CD4-positive, alpha-beta memory T cell (primary cell): ENCODE measurements at regions of chr2 and their contacts with region 1.

Region 1: GRCh38 chr2:21042958-21043743 is 722 bp downstream of the APOB start:
- DNase-seq: peak in 4 of 5 donors; percentile 26 to 36 (median 30)
- H3K4me3 ChIP-seq: no peak overlapping the region
- H3K4me3 Mint-ChIP-seq: peak overlapping the region in 6 of 8 donors; percentile 14 to 71 (median 54)
- H3K27ac ChIP-seq: no peak overlapping the region
- H3K27ac Mint-ChIP-seq: peak overlapping the region in 1 of 7 donors; percentile 40
- H3K4me1 ChIP-seq: peaks cover 5% of the 10 kb centered on the region
- H3K4me1 Mint-ChIP-seq: peaks cover 3 to 5% (median 5%) of the 10 kb centered on the region in 4 donors
- H3K27me3 ChIP-seq: no peaks in the 10 kb centered on the region
- H3K27me3 Mint-ChIP-seq: peaks cover 9 to 33% of the 10 kb centered on the region in 2 donors

Region 2: GRCh38 chr2:21032338-21033236 is 10.6 kb before region 1 on chr2:
- CTCF ChIA-PET with region 1: interaction called, 18 read pairs
- POLR2A ChIA-PET with region 1: no interaction called
- intact Hi-C with region 1: no loop called
- DNase-seq: no peak
- H3K4me3 ChIP-seq: no peak overlapping the region
- H3K4me3 Mint-ChIP-seq: no peak overlapping the region
- H3K27ac ChIP-seq: no peak overlapping the region
- H3K27ac Mint-ChIP-seq: no peak overlapping the region
- H3K4me1 ChIP-seq: no peaks in the 10 kb centered on the region
- H3K4me1 Mint-ChIP-seq: no peaks in the 10 kb centered on the region
- H3K27me3 ChIP-seq: no peaks in the 10 kb centered on the region
- H3K27me3 Mint-ChIP-seq: peaks cover 5 to 14% of the 10 kb centered on the region in 2 donors

Region 3: GRCh38 chr2:21118302-21118920 is 75.3 kb after region 1 on chr2:
- CTCF ChIA-PET with region 1: interaction called, 3 read pairs
- POLR2A ChIA-PET with region 1: no interaction called
- intact Hi-C with region 1: loop called (anchors 2 kb)
- DNase-seq: peak in 2 of 5 donors; percentile 2
- H3K4me3 ChIP-seq: no peak overlapping the region
- H3K4me3 Mint-ChIP-seq: no peak overlapping the region
- H3K27ac ChIP-seq: no peak overlapping the region
- H3K27ac Mint-ChIP-seq: no peak overlapping the region
- H3K4me1 ChIP-seq: no peaks in the 10 kb centered on the region
- H3K4me1 Mint-ChIP-seq: no peaks in the 10 kb centered on the region
- H3K27me3 ChIP-seq: no peaks in the 10 kb centered on the region
- H3K27me3 Mint-ChIP-seq: peaks cover 2 to 9% of the 10 kb centered on the region in 2 donors